Activated T-helper 2 cell treated with anti-CD3 and anti-CD28 coated beads, Interferon-gamma antibody, Interleukin-2, Interleukin-4, amounts not matched to agents 10 μg/mL and 5 μg/mL and 100 μg/mL, durations not matched to agents 14 hours and 24 hours and 36 hours (primary cell): ENCODE measurements at regions of chr3 and their contacts with region 1.

Region 1: DNA sequence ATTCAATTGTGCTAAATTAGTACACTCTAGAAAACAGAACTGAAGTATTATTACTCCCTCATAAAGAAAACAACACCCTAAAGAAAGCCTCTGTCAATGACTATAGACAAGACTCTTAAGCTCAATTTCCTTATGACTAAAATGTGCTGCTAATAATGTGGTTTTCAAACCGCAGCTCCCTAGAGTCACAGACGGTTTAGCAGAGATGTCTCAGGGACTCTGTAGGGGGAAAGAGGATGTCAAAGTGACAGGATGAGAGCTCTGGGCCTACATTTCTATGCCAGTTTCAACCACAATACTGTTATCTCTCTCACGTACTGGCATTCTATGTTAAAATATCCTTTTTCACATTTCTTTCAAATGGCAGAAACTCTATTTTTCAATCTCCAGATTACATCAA is 37.6 kb upstream of the WDR49 start:
- DNase-seq: peak; percentile 36
- H3K4me3 Mint-ChIP-seq: no peak overlapping the region
- H3K27ac Mint-ChIP-seq: peak overlapping the region; percentile 63
- H3K4me1 Mint-ChIP-seq: peaks cover 23% of the 10 kb centered on the region
- H3K27me3 Mint-ChIP-seq: no peaks in the 10 kb centered on the region

Region 2: GRCh38 chr3:167734498-167735232 is 43.3 kb after region 1 on chr3 and contains the start of gene PDCD10:
- intact Hi-C with region 1: loop called (anchors 1 kb)
- DNase-seq: peak; percentile 95
- H3K4me3 Mint-ChIP-seq: no peak within 1 kb of the TSS
- H3K27ac Mint-ChIP-seq: no peak within 1 kb of the TSS
- H3K4me1 Mint-ChIP-seq: peaks cover 16% of the 10 kb centered on the region
- H3K27me3 Mint-ChIP-seq: peaks cover 7% of the 10 kb centered on the region
- total RNA-seq, gene PDCD10: 73.8 and 80.9 TPM in 2 replicates